ENCODE measurements at regions of chr10 and their contacts with region 1.

Region 1: DNA sequence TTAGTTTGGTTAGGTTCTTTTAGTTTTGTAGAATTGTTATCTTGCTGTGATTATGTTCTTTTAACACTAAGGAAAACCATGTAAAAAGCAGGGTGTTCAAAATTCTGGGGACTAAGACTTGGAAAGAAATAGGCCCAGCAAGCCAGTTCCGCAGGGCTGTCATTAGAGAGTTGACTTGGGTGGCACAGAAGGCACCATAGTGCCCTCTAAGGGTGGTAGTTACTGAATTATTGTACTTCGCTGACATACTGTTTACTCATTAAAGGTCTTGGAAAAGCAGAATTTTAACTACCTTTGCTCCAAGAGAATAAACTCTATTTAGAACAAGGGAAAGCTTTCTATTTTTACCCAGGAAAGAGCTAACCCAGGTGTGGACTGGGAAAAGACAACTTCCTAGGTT is 86.5 kb downstream of the OTUD1 start:
- DNase-seq: peak; percentile 27
- H3K4me3 Mint-ChIP-seq: no peak overlapping the region
- H3K27ac Mint-ChIP-seq: no peak overlapping the region
- H3K4me1 Mint-ChIP-seq: no peaks in the 10 kb centered on the region
- H3K27me3 Mint-ChIP-seq: peaks cover 4% of the 10 kb centered on the region

Region 2: DNA sequence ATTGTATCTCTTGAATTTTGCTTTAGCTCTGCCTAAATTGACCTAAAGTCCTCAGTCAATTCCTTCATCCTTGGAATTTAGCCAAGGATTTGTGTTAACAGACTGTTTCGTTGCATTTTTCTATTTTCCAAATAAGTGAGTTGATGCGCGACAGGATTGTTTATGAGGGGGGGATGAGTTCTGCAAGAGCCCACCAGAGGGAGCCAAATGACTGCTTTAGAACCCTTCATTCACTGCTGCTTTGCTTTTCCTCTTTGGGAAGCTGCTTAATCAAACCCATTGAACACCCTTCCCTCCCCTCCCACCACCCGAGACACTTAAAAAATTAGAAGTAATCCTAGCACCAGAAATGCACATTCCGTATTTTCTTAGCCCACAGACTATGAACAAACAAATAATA is 367.0 kb before region 1 on chr10:
- CTCF ChIA-PET with region 1: interaction called, 4 read pairs
- POLR2A ChIA-PET with region 1: no interaction called
- intact Hi-C with region 1: loop called (anchors 10 kb)
- DNase-seq: peak; percentile 44
- H3K4me3 Mint-ChIP-seq: no peak overlapping the region
- H3K27ac Mint-ChIP-seq: no peak overlapping the region
- H3K4me1 Mint-ChIP-seq: peaks cover 2% of the 10 kb centered on the region
- H3K27me3 Mint-ChIP-seq: peaks cover 23% of the 10 kb centered on the region

Region 3: GRCh38 chr10:23293145-23293724 is 232.2 kb before region 1 on chr10:
- CTCF ChIA-PET with region 1: interaction called, 16 read pairs
- POLR2A ChIA-PET with region 1: no interaction called
- intact Hi-C with region 1: no loop called
- DNase-seq: peak; percentile 53
- H3K4me3 Mint-ChIP-seq: no peak overlapping the region
- H3K27ac Mint-ChIP-seq: no peak overlapping the region
- H3K4me1 Mint-ChIP-seq: peaks cover 2% of the 10 kb centered on the region
- H3K27me3 Mint-ChIP-seq: peaks cover 14% of the 10 kb centered on the region

Region 4: DNA sequence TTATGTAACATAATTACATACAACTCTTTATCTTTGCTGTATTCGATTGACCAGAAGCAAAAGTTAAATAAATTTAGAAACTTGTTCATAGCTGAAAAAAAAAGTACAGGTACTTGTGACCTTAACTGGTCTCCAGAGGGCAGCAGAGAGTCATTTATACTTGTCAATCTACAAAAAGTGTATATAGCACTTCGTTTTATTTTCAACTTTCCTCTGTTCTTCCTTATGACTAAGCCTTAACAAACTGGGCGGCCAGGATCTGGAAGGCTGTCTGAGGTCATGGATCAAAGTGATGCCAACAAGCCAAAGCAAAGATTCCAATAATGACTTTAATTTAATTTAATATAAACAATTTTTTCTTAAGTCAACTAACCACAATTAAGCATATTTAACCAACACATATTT is 210.6 kb before region 1 on chr10:
- CTCF ChIA-PET with region 1: interaction called, 149 read pairs
- POLR2A ChIA-PET with region 1: no interaction called
- intact Hi-C with region 1: loop called (anchors 1 kb)
- DNase-seq: no peak
- H3K4me3 Mint-ChIP-seq: no peak overlapping the region
- H3K27ac Mint-ChIP-seq: no peak overlapping the region
- H3K4me1 Mint-ChIP-seq: no peaks in the 10 kb centered on the region
- H3K27me3 Mint-ChIP-seq: no peaks in the 10 kb centered on the region

Region 5: DNA sequence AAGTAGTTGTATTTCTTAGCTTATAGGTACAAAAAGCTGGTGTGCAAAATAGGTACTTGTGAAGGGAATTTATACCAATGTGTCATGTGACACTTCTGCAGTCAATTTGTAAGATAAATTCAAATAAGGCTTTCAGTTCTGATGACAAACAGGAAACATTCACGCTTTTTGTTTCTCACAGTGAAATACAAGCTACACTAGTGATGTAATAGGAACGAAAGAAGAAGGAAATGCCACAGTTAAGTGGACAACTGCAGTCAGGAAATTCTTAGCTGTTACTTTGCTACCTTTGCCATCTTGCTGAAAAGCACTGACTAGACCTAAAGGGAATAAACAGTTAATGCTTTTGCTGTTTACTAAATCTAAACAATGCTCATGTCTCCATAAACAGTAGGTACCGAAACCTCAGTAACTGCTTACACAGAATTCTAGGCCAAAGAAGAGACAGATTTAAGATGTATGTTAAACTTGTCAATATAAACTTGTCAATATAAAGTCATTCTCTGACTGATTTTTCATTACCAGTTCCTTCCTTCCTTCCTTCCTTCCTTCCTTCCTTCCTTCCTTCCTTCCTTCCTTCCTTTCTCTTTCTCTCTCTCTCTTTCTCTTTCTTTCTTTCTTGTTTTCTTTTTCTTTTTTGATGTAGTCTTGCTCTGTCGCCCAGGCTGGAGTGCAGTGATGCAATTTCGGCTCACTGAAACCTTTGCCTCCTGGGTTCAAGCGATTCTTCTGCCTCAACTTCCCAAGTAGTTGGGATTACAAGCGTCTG is 76.4 kb before region 1 on chr10:
- CTCF ChIA-PET with region 1: interaction called, 4 read pairs
- POLR2A ChIA-PET with region 1: interaction called, 3 read pairs
- intact Hi-C with region 1: loop called (anchors 5 kb)
- DNase-seq: no peak
- H3K4me3 Mint-ChIP-seq: no peak overlapping the region
- H3K27ac Mint-ChIP-seq: peak overlapping the region; percentile 82
- H3K4me1 Mint-ChIP-seq: peaks cover 34% of the 10 kb centered on the region
- H3K27me3 Mint-ChIP-seq: no peaks in the 10 kb centered on the region

Region 6: GRCh38 chr10:23613900-23614299 is 88.5 kb after region 1 on chr10:
- CTCF ChIA-PET with region 1: no interaction called
- POLR2A ChIA-PET with region 1: no interaction called
- intact Hi-C with region 1: no loop called
- DNase-seq: no peak
- H3K4me3 Mint-ChIP-seq: no peak overlapping the region
- H3K27ac Mint-ChIP-seq: no peak overlapping the region
- H3K4me1 Mint-ChIP-seq: no peaks in the 10 kb centered on the region
- H3K27me3 Mint-ChIP-seq: no peaks in the 10 kb centered on the region

Region 7: DNA sequence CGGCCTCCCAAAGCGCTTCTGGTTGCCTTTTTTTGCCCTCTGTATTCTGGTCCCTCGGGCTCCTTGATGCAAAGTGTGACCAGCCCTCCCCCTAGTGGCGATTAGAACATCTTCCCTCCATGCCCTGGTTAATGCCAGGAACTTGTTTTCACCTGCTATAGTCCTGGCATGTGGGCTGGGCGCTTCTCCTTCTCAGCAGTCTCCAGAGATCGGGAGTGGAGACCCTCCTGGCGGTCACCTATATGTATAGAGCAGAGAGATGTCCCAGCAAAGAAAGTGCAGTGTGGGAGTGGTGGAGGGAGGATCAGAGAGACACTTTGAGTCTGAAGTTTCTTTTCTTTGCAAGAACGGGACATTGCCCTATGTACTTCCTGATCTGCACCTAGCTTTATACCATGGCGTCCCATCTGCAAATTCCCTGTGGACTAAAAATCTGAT is 177.6 kb after region 1 on chr10:
- CTCF ChIA-PET with region 1: no interaction called
- POLR2A ChIA-PET with region 1: no interaction called
- intact Hi-C with region 1: loop called (anchors 5 kb)
- DNase-seq: peak; percentile 54
- H3K4me3 Mint-ChIP-seq: no peak overlapping the region
- H3K27ac Mint-ChIP-seq: no peak overlapping the region
- H3K4me1 Mint-ChIP-seq: no peaks in the 10 kb centered on the region
- H3K27me3 Mint-ChIP-seq: peaks cover 27% of the 10 kb centered on the region

Region 8: GRCh38 chr10:23818484-23818883 is 293.1 kb after region 1 on chr10:
- CTCF ChIA-PET with region 1: no interaction called
- POLR2A ChIA-PET with region 1: no interaction called
- intact Hi-C with region 1: no loop called
- DNase-seq: no peak
- H3K4me3 Mint-ChIP-seq: no peak overlapping the region
- H3K27ac Mint-ChIP-seq: no peak overlapping the region
- H3K4me1 Mint-ChIP-seq: no peaks in the 10 kb centered on the region
- H3K27me3 Mint-ChIP-seq: no peaks in the 10 kb centered on the region

Measured in activated CD4-positive, alpha-beta memory T cell treated with anti-CD3 and anti-CD28 coated beads for 36 hours (primary cell).